ENCODE measurements at regions of chr1 and their contacts with region 1.

Region 1: GRCh38 chr1:158117854-158118704 is 62.6 kb upstream of the CD1D start:
- DNase-seq: peak; percentile 57 to 81
- ATAC-seq: peak; percentile 65 to 84
- H3K4me3 ChIP-seq: no peak overlapping the region; the same call in 2 of the 3 replicates
- H3K27ac ChIP-seq: peak overlapping the region in 1 of 2 experiments; percentile 45; a peak in 1 of 6 replicates
- H3K4me1 ChIP-seq: 0 out of 3 replicates have a peak, but pooled peaks cover 10% of the 10 kb centered on the region
- CTCF ChIP-seq: peak; percentile 47
- EP300 ChIP-seq: no peak
- POLR2A ChIP-seq: no peak
- RAD21 ChIP-seq: peak; percentile 29 to 46; a peak in 4 of 5 replicates

Region 2: GRCh38 chr1:157704878-157705277 is 413.2 kb before region 1 on chr1:
- CTCF ChIA-PET with region 1: no interaction called
- POLR2A ChIA-PET with region 1: no interaction called
- DNase-seq: no peak
- ATAC-seq: no peak
- H3K4me3 ChIP-seq: no peak overlapping the region
- H3K27ac ChIP-seq: no peak overlapping the region
- H3K4me1 ChIP-seq: no peaks in the 10 kb centered on the region
- CTCF ChIP-seq: no peak
- EP300 ChIP-seq: no peak
- POLR2A ChIP-seq: no peak
- RAD21 ChIP-seq: no peak

Region 3: GRCh38 chr1:158035976-158036583 is 82.0 kb before region 1 on chr1:
- CTCF ChIA-PET with region 1: interaction called, 10 read pairs
- POLR2A ChIA-PET with region 1: no interaction called
- DNase-seq: peak in 1 of 2 experiments; percentile 72
- ATAC-seq: peak; percentile 23 to 57; a peak in 3 of 6 replicates
- H3K4me3 ChIP-seq: no peak overlapping the region
- H3K27ac ChIP-seq: peak overlapping the region; percentile 66 to 84; a peak in 5 of 6 replicates
- H3K4me1 ChIP-seq: peaks cover 36% of the 10 kb centered on the region
- CTCF ChIP-seq: peak; percentile 88
- EP300 ChIP-seq: no peak
- POLR2A ChIP-seq: no peak
- RAD21 ChIP-seq: peak; percentile 81 to 84

Region 4: GRCh38 chr1:158095737-158096335 is 22.2 kb before region 1 on chr1:
- CTCF ChIA-PET with region 1: interaction called, 46 read pairs
- POLR2A ChIA-PET with region 1: no interaction called
- DNase-seq: peak; percentile 38 to 60
- ATAC-seq: peak; percentile 72 to 90
- H3K4me3 ChIP-seq: no peak overlapping the region
- H3K27ac ChIP-seq: no peak overlapping the region
- H3K4me1 ChIP-seq: no peaks in the 10 kb centered on the region
- CTCF ChIP-seq: peak; percentile 52
- EP300 ChIP-seq: no peak
- POLR2A ChIP-seq: no peak
- RAD21 ChIP-seq: peak in 1 of 2 experiments; percentile 16; a peak in 2 of 5 replicates

Region 5: DNA sequence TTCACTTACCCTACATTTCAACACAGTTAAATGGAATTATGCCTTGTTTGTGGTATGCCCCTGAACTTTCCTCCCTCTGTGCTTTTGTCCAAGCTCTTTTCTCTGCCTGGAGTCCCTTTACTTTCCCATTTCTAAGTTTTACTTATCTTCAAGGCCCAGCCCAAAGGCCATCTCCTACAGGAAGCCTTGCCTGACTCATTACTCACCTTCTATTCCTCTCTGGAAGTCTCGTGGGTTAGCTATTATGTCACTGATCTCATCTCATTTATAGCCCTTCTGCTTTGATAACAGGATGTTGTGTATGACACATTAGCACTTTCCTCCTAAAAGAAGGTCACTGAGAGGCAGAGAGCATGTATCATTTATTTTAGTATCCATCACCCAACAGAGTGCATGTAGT is 16.2 kb before region 1 on chr1:
- CTCF ChIA-PET with region 1: interaction called, 157 read pairs
- POLR2A ChIA-PET with region 1: no interaction called
- DNase-seq: peak in 1 of 2 experiments; percentile 30
- ATAC-seq: peak; percentile 50 to 56; a peak in 5 of 6 replicates
- H3K4me3 ChIP-seq: no peak overlapping the region
- H3K27ac ChIP-seq: no peak overlapping the region
- H3K4me1 ChIP-seq: peaks cover 8% of the 10 kb centered on the region; the same call in 1 of the 3 replicates
- CTCF ChIP-seq: no peak
- EP300 ChIP-seq: no peak
- POLR2A ChIP-seq: no peak
- RAD21 ChIP-seq: no peak

Measured in A549 (cell line).